ENCODE measurements at regions of chr2 and their contacts with region 1.

Region 1: GRCh38 chr2:206274434-206275268 is at the start of gene ZDBF2:
- DNase-seq: peak; percentile 15 to 67 (median 44)
- ATAC-seq: peak; percentile 83 to 90 (median 90)
- H3K4me3 ChIP-seq: peak within 1 kb of the TSS; percentile 58 to 84
- H3K4me3 Mint-ChIP-seq: peak within 1 kb of the TSS; percentile 81 to 89 (median 87)
- H3K27ac ChIP-seq: peak within 1 kb of the TSS; percentile 59
- H3K27ac Mint-ChIP-seq: peak within 1 kb of the TSS; percentile 75 to 80
- H3K4me1 ChIP-seq: peaks cover 8 to 15% of the 10 kb centered on the region in 2 experiments
- H3K4me1 Mint-ChIP-seq: peaks cover 19 to 20% (median 19%) of the 10 kb centered on the region in 3 donors
- H3K27me3 ChIP-seq: peaks cover 3 to 30% of the 10 kb centered on the region in 2 experiments
- H3K27me3 Mint-ChIP-seq: peaks cover 24 to 50% of the 10 kb centered on the region in 2 donors
- total RNA-seq, gene ZDBF2: 13.5 to 21.3 (median 14.8) TPM

Region 2: GRCh38 chr2:206083602-206084438 is 190.8 kb before region 1 on chr2:
- CTCF ChIA-PET with region 1: no interaction called
- POLR2A ChIA-PET with region 1: interaction called in 1 of 2 experiments, 14 read pairs
- DNase-seq: peak in 7 of 35 experiments; percentile 6 to 48 (median 11)
- ATAC-seq: no peak
- H3K4me3 ChIP-seq: peak overlapping the region; percentile 89 to 93
- H3K4me3 Mint-ChIP-seq: peak overlapping the region; percentile 96 to 99 (median 97)
- H3K27ac ChIP-seq: peak overlapping the region; percentile 79
- H3K27ac Mint-ChIP-seq: peak overlapping the region; percentile 99
- H3K4me1 ChIP-seq: peaks cover 18 to 25% of the 10 kb centered on the region in 2 experiments
- H3K4me1 Mint-ChIP-seq: peaks cover 57 to 64% (median 63%) of the 10 kb centered on the region in 3 donors
- H3K27me3 ChIP-seq: no peaks in the 10 kb centered on the region
- H3K27me3 Mint-ChIP-seq: no peaks in the 10 kb centered on the region

Region 3: DNA sequence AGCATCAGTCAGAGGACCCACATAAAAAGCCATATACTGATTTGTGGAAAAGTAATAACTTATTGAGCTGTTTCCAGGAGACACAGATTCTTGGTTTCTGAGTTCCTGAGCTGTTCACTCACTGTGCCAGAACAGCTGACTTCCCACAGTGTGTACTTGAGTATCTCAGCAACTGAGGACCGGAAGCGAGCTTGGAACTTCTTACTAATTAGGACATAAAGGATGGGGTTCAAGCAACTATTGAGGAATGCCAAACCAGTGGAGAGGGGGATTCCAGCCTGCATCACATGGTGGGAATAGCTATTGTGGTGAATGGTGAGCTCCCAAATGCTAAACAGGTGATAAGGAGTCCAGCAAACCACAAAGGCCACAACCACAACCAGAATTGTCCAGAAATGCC is 98.5 kb before region 1 on chr2:
- CTCF ChIA-PET with region 1: no interaction called
- POLR2A ChIA-PET with region 1: interaction called in 1 of 2 experiments, 10 read pairs
- DNase-seq: no peak
- ATAC-seq: no peak
- H3K4me3 ChIP-seq: no peak overlapping the region
- H3K4me3 Mint-ChIP-seq: no peak overlapping the region
- H3K27ac ChIP-seq: no peak overlapping the region
- H3K27ac Mint-ChIP-seq: no peak overlapping the region
- H3K4me1 ChIP-seq: no peaks in the 10 kb centered on the region
- H3K4me1 Mint-ChIP-seq: no peaks in the 10 kb centered on the region
- H3K27me3 ChIP-seq: peaks cover 0 to 2% of the 10 kb centered on the region in 2 experiments
- H3K27me3 Mint-ChIP-seq: peaks cover 2 to 5% of the 10 kb centered on the region in 2 donors

Region 4: GRCh38 chr2:206241736-206242135 is 32.9 kb before region 1 on chr2:
- CTCF ChIA-PET with region 1: no interaction called
- POLR2A ChIA-PET with region 1: no interaction called
- DNase-seq: no peak
- ATAC-seq: no peak
- H3K4me3 ChIP-seq: no peak overlapping the region
- H3K4me3 Mint-ChIP-seq: no peak overlapping the region
- H3K27ac ChIP-seq: no peak overlapping the region
- H3K27ac Mint-ChIP-seq: no peak overlapping the region
- H3K4me1 ChIP-seq: no peaks in the 10 kb centered on the region
- H3K4me1 Mint-ChIP-seq: peaks cover 0 to 2% (median 0%) of the 10 kb centered on the region in 3 donors
- H3K27me3 ChIP-seq: peaks cover 0 to 8% of the 10 kb centered on the region in 2 experiments
- H3K27me3 Mint-ChIP-seq: peaks cover 7 to 16% of the 10 kb centered on the region in 2 donors